ENCODE measurements at regions of chr18 and their contacts with region 1.

Region 1: GRCh38 chr18:1147730-1148129 is 243.1 kb downstream of the ADCYAP1 start:
- DNase-seq: no peak
- ATAC-seq: no peak
- H3K4me3 ChIP-seq: no peak overlapping the region
- H3K27ac ChIP-seq: no peak overlapping the region
- H3K4me1 ChIP-seq: no peaks in the 10 kb centered on the region
- H3K27me3 ChIP-seq: no peaks in the 10 kb centered on the region
- CTCF ChIP-seq: no peak
- POLR2A ChIP-seq: no peak
- RAD21 ChIP-seq: no peak

Region 2: DNA sequence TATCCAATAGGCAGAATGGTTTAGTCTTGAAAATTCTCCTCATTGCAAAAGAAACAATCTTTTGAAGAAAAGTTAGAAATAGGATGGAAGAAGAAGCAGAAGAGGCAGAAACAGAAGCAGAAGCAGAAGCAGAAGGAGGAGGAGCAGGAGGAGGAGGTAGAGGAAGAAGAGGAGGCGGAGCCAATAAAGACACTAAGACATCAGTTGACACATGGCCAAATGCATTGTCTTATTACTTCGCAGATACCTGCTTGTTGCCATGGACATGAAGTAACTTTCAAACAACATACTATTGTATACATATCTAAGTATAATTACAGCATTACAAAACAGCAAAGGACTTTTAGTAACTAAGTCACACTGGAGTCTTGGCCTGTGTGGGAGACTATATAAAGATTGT is 817.3 kb after region 1 on chr18:
- CTCF ChIA-PET with region 1: no interaction called
- POLR2A ChIA-PET with region 1: no interaction called
- dilution Hi-C with region 1: no loop called
- in situ Hi-C with region 1: no loop called
- intact Hi-C with region 1: loop called (anchors 10 kb)
- DNase-seq: no peak
- ATAC-seq: no peak
- H3K4me3 ChIP-seq: no peak overlapping the region
- H3K27ac ChIP-seq: no peak overlapping the region
- H3K4me1 ChIP-seq: no peaks in the 10 kb centered on the region
- H3K27me3 ChIP-seq: no peaks in the 10 kb centered on the region
- CTCF ChIP-seq: no peak
- POLR2A ChIP-seq: no peak
- RAD21 ChIP-seq: no peak